CD8-positive, alpha-beta T cell (primary cell): ENCODE measurements at regions of chrX and their contacts with region 1.

Region 1: DNA sequence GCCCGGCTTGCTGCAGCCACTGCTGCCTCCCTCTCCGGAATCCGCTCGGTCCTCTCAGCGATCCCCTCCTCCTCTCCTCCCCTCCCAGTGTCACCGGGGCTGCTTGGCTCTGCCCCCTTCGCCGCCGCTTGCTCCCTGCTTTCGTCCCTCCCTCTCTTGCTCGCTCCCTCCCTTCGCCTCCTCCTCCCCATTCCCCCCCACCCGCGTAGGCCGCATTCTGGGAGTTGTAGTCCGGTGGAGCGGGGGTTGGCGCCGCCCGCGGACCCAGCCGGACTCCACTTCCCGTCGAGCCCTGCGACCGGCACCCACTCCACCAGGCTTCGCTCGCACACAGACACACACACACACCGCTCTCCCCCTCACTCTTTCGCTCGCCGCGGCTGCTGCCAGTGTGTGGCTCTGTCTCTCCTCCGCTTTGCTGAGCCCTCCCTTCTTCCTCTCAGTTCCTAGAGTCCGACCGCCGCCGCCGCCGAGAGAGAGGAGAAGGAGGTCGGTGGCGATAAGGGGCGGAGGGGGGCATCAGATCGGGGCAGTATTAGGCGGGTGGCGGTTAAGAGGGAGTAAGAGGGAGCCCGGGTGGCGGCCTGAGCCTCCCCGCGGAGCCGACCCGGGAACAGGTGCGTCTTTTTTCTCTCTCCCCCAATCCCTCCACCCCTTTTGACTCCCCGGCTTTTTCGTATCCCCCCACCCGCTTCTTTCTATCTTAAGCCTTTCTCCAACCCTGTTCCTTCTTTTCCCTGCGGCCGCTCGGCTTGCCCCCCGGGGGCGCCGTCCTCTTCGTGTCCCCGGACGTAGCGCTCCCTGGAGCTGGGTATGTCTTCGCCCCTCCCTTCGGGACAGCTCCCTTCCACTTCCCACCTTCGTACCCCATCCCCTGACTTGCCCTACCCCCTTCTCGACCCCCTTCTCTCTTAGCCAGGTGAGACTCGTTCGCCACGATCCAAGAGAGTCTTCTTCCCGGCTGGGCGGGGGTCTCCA is at the start of gene BCORL1:
- DNase-seq: peak; percentile 76 to 95 (median 85)
- ATAC-seq: peak; percentile 88
- H3K4me3 ChIP-seq: peak within 1 kb of the TSS in 1 of 2 experiments; percentile 59
- H3K4me3 Mint-ChIP-seq: no peak within 1 kb of the TSS
- H3K27ac ChIP-seq: peak within 1 kb of the TSS; percentile 27 to 46
- H3K27ac Mint-ChIP-seq: peak within 1 kb of the TSS; percentile 71
- H3K4me1 ChIP-seq: peaks cover 4% of the 10 kb centered on the region
- H3K4me1 Mint-ChIP-seq: peaks cover 27% of the 10 kb centered on the region
- H3K27me3 ChIP-seq: no peaks in the 10 kb centered on the region
- H3K27me3 Mint-ChIP-seq: no peaks in the 10 kb centered on the region
- CTCF ChIP-seq: no peak
- total RNA-seq, gene BCORL1: 2.1 to 2.4 TPM

Region 2: DNA sequence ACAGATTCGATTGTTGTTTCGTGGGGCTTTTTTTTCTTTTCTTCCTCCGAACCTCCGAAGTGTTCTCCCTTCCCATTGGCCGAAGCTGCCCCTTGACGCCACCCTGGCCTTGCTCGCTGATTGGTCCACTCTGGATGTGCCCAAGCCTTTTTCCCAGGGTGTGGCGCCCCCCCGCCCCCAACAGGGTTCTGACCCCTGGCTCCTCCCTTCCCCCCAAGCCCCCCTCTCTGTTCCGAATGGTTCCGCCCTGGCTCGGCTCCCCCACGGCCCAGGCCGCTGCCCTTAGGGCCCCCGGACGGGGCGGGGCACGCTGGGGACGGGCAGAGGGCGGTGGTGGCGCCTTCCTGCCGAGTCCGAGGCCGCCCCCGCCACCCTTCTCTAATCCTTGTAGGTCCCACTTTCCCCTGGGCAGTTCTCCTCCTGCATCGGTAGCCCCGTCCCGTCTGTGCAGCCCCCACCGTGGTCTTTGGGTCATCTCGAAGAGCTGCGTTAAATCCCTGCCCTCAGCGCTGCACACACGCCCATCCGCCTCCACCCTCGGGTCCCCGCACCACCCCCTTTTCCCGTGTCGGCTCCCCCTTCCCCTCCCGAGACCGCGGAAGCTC is 51.0 kb before region 1 on chrX:
- CTCF ChIA-PET with region 1: interaction called, 3 read pairs
- POLR2A ChIA-PET with region 1: no interaction called
- intact Hi-C with region 1: loop called (anchors 1 to 2 kb)
- DNase-seq: peak; percentile 26 to 82 (median 55)
- ATAC-seq: peak; percentile 50
- H3K4me3 ChIP-seq: peak overlapping the region; percentile 58 to 70
- H3K4me3 Mint-ChIP-seq: peak overlapping the region; percentile 75
- H3K27ac ChIP-seq: peak overlapping the region in 1 of 2 experiments; percentile 77
- H3K27ac Mint-ChIP-seq: peak overlapping the region; percentile 88
- H3K4me1 ChIP-seq: no peaks in the 10 kb centered on the region
- H3K4me1 Mint-ChIP-seq: peaks cover 8% of the 10 kb centered on the region
- H3K27me3 ChIP-seq: no peaks in the 10 kb centered on the region
- H3K27me3 Mint-ChIP-seq: no peaks in the 10 kb centered on the region
- CTCF ChIP-seq: no peak

Region 3: GRCh38 chrX:130060122-130061069 is 77.8 kb after region 1 on chrX:
- CTCF ChIA-PET with region 1: no interaction called
- POLR2A ChIA-PET with region 1: no interaction called
- intact Hi-C with region 1: loop called (anchors 1 kb)
- DNase-seq: peak; percentile 54 to 91 (median 80)
- ATAC-seq: peak; percentile 87
- H3K4me3 ChIP-seq: peak overlapping the region; percentile 48 to 53
- H3K4me3 Mint-ChIP-seq: peak overlapping the region; percentile 66
- H3K27ac ChIP-seq: no peak overlapping the region
- H3K27ac Mint-ChIP-seq: no peak overlapping the region
- H3K4me1 ChIP-seq: peaks cover 7% of the 10 kb centered on the region
- H3K4me1 Mint-ChIP-seq: peaks cover 12% of the 10 kb centered on the region
- H3K27me3 ChIP-seq: no peaks in the 10 kb centered on the region
- H3K27me3 Mint-ChIP-seq: no peaks in the 10 kb centered on the region
- CTCF ChIP-seq: peak; percentile 67

Region 4: GRCh38 chrX:130165703-130166502 is 183.3 kb after region 1 on chrX and contains the start of gene AIFM1:
- CTCF ChIA-PET with region 1: no interaction called
- POLR2A ChIA-PET with region 1: no interaction called
- intact Hi-C with region 1: loop called in 1 of 2 experiments (anchors 5 kb)
- DNase-seq: peak; percentile 68 to 95 (median 85)
- ATAC-seq: peak; percentile 87
- H3K4me3 ChIP-seq: peak within 1 kb of the TSS; percentile 57 to 74
- H3K4me3 Mint-ChIP-seq: peak within 1 kb of the TSS; percentile 90
- H3K27ac ChIP-seq: peak within 1 kb of the TSS; percentile 54 to 80
- H3K27ac Mint-ChIP-seq: peak within 1 kb of the TSS; percentile 90
- H3K4me1 ChIP-seq: peaks cover 17% of the 10 kb centered on the region
- H3K4me1 Mint-ChIP-seq: peaks cover 42% of the 10 kb centered on the region
- H3K27me3 ChIP-seq: no peaks in the 10 kb centered on the region
- H3K27me3 Mint-ChIP-seq: no peaks in the 10 kb centered on the region
- CTCF ChIP-seq: no peak
- total RNA-seq, gene AIFM1: 4.4 to 4.9 TPM

Region 5: GRCh38 chrX:130498653-130499274 is 516.2 kb after region 1 on chrX:
- CTCF ChIA-PET with region 1: no interaction called
- POLR2A ChIA-PET with region 1: no interaction called
- intact Hi-C with region 1: no loop called
- DNase-seq: no peak
- ATAC-seq: no peak
- H3K4me3 ChIP-seq: no peak overlapping the region
- H3K4me3 Mint-ChIP-seq: no peak overlapping the region
- H3K27ac ChIP-seq: no peak overlapping the region
- H3K27ac Mint-ChIP-seq: no peak overlapping the region
- H3K4me1 ChIP-seq: no peaks in the 10 kb centered on the region
- H3K4me1 Mint-ChIP-seq: no peaks in the 10 kb centered on the region
- H3K27me3 ChIP-seq: no peaks in the 10 kb centered on the region
- H3K27me3 Mint-ChIP-seq: no peaks in the 10 kb centered on the region
- CTCF ChIP-seq: no peak